ENCODE measurements at regions of chr11 and their contacts with region 1.

Region 1: GRCh38 chr11:64185816-64186498 is at the start of gene STIP1:
- DNase-seq: peak; percentile 100
- ATAC-seq: peak; percentile 86
- H3K4me3 ChIP-seq: peak within 1 kb of the TSS; percentile 81
- H3K27ac ChIP-seq: peak within 1 kb of the TSS; percentile 59
- H3K4me1 ChIP-seq: peaks cover 27% of the 10 kb centered on the region
- H3K27me3 ChIP-seq: no peaks in the 10 kb centered on the region
- CTCF ChIP-seq: peak; percentile 39; the same call in 1 of the 2 replicates
- total RNA-seq, gene STIP1: 543 and 557 TPM in 2 replicates

Region 2: DNA sequence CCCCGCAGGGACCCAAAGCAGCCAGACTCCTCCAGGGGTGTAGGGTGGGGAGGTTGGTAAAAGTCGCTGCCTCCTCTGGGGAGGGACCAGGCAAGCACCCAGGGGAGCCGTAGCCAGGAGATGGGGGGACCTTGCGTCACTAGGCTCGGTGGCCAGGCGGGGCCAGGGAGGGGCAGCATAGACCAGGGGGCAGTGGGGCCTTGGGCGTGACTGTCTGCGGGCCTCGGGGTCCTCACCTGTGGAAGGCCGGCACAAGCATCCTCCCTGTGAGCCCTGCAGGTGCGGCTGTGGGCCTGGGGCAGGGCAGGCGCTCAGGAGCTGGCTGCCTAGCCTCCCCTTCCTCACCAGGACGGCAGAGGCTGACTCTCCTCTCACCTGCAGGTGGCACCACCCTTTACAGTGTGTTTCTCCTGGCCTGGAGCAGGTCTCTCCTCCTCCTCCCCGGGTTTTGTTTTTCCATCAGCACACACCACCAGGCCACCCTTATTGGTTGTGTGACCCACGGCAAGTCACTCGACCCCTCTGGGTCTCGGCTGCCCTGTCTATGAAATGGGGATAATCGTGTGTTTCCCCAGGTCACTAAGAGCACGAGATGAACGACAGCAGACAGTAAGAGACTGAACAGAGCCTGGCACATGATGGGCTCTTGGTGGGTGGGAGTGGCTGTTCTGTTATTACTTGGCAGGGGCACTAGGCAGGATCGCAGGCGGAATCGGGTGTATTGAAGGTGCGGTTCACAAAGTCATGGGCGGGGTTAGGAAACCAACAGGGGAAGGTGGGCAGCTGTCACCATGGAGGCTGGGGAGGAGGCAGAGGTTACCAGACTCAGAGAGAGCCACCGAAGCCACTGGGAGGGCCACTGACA is 97.6 kb before region 1 on chr11:
- CTCF ChIA-PET with region 1: no interaction called
- POLR2A ChIA-PET with region 1: no interaction called
- intact Hi-C with region 1: no loop called
- DNase-seq: peak; percentile 17
- ATAC-seq: peak; percentile 54
- H3K4me3 ChIP-seq: no peak overlapping the region
- H3K27ac ChIP-seq: no peak overlapping the region
- H3K4me1 ChIP-seq: peaks cover 3% of the 10 kb centered on the region
- H3K27me3 ChIP-seq: no peaks in the 10 kb centered on the region
- CTCF ChIP-seq: peak; percentile 68

Region 3: GRCh38 chr11:64165849-64166635 is 19.9 kb before region 1 on chr11 and contains the start of gene MACROD1:
- CTCF ChIA-PET with region 1: interaction called, 11 read pairs
- POLR2A ChIA-PET with region 1: interaction called, 3 read pairs
- intact Hi-C with region 1: loop called (anchors 2 kb)
- DNase-seq: peak; percentile 96
- ATAC-seq: peak; percentile 89
- H3K4me3 ChIP-seq: peak within 1 kb of the TSS; percentile 71
- H3K27ac ChIP-seq: peak within 1 kb of the TSS; percentile 76
- H3K4me1 ChIP-seq: peaks cover 21% of the 10 kb centered on the region
- H3K27me3 ChIP-seq: no peaks in the 10 kb centered on the region
- CTCF ChIP-seq: no peak
- total RNA-seq, gene MACROD1: 71.4 and 77.1 TPM in 2 replicates

Region 4: GRCh38 chr11:64225612-64226506 is 39.9 kb after region 1 on chr11 and contains the starts of genes NUDT22 and TRPT1:
- CTCF ChIA-PET with region 1: no interaction called
- POLR2A ChIA-PET with region 1: interaction called, 13 read pairs
- intact Hi-C with region 1: loop called (anchors 5 kb)
- DNase-seq: peak; percentile 88
- ATAC-seq: peak; percentile 68
- H3K4me3 ChIP-seq: peak within 1 kb of the TSS; percentile 83
- H3K27ac ChIP-seq: no peak within 1 kb of the TSS
- H3K4me1 ChIP-seq: peaks cover 35% of the 10 kb centered on the region
- H3K27me3 ChIP-seq: no peaks in the 10 kb centered on the region
- CTCF ChIP-seq: peak; percentile 49
- total RNA-seq, gene NUDT22: 98.3 and 102 TPM in 2 replicates
- total RNA-seq, gene TRPT1: 56.0 and 57.7 TPM in 2 replicates